ENCODE measurements at regions of chr16 and their contacts with region 1.

Region 1: GRCh38 chr16:52912565-52913173 is 140.0 kb downstream of the CHD9NB start:
- DNase-seq: peak; percentile 78
- ATAC-seq: peak; percentile 97
- H3K4me3 ChIP-seq: no peak overlapping the region
- H3K27ac ChIP-seq: no peak overlapping the region
- H3K4me1 ChIP-seq: no peaks in the 10 kb centered on the region
- H3K27me3 ChIP-seq: peaks cover 0 to 4% of the 10 kb centered on the region in 2 experiments; a peak in 2 of 5 replicates
- CTCF ChIP-seq: peak; percentile 90
- EP300 ChIP-seq: no peak
- POLR2A ChIP-seq: no peak
- RAD21 ChIP-seq: peak; percentile 91

Region 2: DNA sequence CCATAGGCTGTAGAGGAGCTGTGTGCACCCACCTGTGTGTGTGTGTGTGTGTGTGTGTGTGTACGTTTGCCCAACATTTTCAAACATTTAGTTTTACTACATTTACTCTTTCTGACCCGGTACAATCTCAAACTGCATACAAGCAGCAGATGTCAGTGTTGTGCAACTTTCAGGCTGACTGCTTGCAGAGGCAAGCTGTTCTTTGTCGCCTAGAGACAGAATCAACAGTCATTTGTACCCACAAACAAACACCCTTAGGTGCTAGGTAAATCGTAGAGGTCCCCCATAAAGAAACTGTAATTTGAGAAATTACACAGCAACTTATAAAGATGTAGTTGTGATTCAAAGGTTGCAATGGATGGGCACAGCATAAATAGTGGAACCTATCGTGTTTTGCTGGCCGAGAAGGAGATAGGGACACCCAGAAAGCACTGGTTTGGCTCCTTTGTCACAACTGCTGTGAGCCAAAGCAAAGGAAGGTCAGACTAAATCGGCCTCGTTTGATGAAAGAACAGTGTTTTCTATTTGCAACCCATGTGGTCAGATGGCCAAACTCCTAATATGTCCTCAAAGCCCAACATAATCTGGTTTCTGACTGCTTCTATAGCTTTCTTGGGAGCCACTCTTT is 844.1 kb before region 1 on chr16:
- CTCF ChIA-PET with region 1: interaction called, 53 read pairs
- POLR2A ChIA-PET with region 1: no interaction called
- in situ Hi-C with region 1: loop called (anchors 5 kb)
- intact Hi-C with region 1: loop called (anchors 1 kb)
- DNase-seq: peak; percentile 35
- ATAC-seq: peak; percentile 72
- H3K4me3 ChIP-seq: no peak overlapping the region
- H3K27ac ChIP-seq: no peak overlapping the region
- H3K4me1 ChIP-seq: no peaks in the 10 kb centered on the region
- H3K27me3 ChIP-seq: no peaks in the 10 kb centered on the region
- CTCF ChIP-seq: peak; percentile 80
- EP300 ChIP-seq: no peak
- POLR2A ChIP-seq: no peak
- RAD21 ChIP-seq: peak; percentile 55; the same call in 1 of the 2 replicates

Region 3: GRCh38 chr16:52184336-52184735 is 728.3 kb before region 1 on chr16:
- CTCF ChIA-PET with region 1: no interaction called
- POLR2A ChIA-PET with region 1: no interaction called
- in situ Hi-C with region 1: loop called (anchors 10 kb)
- intact Hi-C with region 1: no loop called
- DNase-seq: no peak
- ATAC-seq: no peak
- H3K4me3 ChIP-seq: no peak overlapping the region
- H3K27ac ChIP-seq: no peak overlapping the region
- H3K4me1 ChIP-seq: no peaks in the 10 kb centered on the region
- H3K27me3 ChIP-seq: no peaks in the 10 kb centered on the region; a peak in 1 of 5 replicates
- CTCF ChIP-seq: no peak
- EP300 ChIP-seq: no peak
- POLR2A ChIP-seq: no peak
- RAD21 ChIP-seq: no peak

Region 4: DNA sequence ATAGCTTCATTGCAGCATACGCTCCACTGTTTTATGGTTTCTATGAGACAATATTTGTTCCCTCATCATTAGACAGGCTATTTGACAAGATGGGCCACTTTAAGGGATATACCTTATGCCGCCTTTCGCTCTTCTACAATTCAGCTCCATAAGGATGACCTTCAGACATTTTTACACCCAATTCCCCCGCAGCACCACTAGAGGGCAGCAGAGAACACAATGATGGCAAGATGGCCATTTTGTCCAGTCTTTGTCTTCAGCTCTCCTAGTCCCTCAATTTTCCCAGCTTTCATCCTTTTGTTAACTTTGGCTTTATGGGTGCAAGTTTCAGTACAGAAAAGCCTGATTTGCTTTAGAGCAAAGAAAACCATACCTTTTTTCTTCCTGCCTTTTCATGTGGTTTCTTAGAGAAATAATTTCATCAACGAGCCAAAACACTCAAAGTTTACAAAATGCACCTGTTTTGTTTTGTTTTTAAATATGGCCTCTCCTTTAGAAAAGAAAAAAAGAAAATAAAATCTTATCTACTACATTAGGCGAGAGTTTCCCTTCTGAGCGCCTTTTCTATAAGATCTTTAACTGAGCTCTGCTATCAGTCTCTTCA is 721.0 kb before region 1 on chr16:
- CTCF ChIA-PET with region 1: interaction called, 14 read pairs
- POLR2A ChIA-PET with region 1: no interaction called
- in situ Hi-C with region 1: loop called (anchors 10 kb)
- intact Hi-C with region 1: loop called (anchors 1 kb)
- DNase-seq: peak; percentile 76
- ATAC-seq: peak; percentile 74
- H3K4me3 ChIP-seq: no peak overlapping the region
- H3K27ac ChIP-seq: no peak overlapping the region
- H3K4me1 ChIP-seq: peaks cover 9% of the 10 kb centered on the region
- H3K27me3 ChIP-seq: no peaks in the 10 kb centered on the region
- CTCF ChIP-seq: peak; percentile 97
- EP300 ChIP-seq: no peak
- POLR2A ChIP-seq: no peak
- RAD21 ChIP-seq: peak; percentile 90

Region 5: GRCh38 chr16:52652033-52652432 is 260.6 kb before region 1 on chr16:
- CTCF ChIA-PET with region 1: no interaction called
- POLR2A ChIA-PET with region 1: no interaction called
- in situ Hi-C with region 1: no loop called
- intact Hi-C with region 1: no loop called
- DNase-seq: no peak
- ATAC-seq: no peak
- H3K4me3 ChIP-seq: no peak overlapping the region
- H3K27ac ChIP-seq: no peak overlapping the region
- H3K4me1 ChIP-seq: peaks cover 15% of the 10 kb centered on the region
- H3K27me3 ChIP-seq: no peaks in the 10 kb centered on the region; a peak in 1 of 5 replicates
- CTCF ChIP-seq: no peak
- EP300 ChIP-seq: no peak
- POLR2A ChIP-seq: no peak
- RAD21 ChIP-seq: no peak

Region 6: DNA sequence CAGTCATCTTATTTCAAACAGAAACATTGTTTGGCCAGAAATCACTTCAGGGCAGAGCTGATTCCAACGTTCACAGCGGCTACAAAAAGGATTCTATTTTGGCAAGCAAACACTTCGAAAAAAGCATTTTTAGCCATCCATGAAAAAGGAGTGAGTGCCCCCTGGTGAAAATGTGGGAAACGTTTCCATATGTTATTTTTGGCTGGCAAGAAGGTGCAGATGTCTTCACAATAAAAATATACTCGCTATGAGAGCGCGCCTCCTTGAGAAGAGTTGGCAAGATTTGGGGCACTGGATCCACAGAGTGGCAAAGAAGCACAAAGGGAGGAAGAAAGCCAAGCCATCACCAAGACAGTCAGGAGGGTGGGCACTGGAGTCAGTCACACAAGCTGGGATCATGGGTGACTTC is 51.1 kb before region 1 on chr16:
- CTCF ChIA-PET with region 1: no interaction called
- POLR2A ChIA-PET with region 1: no interaction called
- in situ Hi-C with region 1: no loop called
- intact Hi-C with region 1: loop called (anchors 2 kb)
- DNase-seq: peak; percentile 65
- ATAC-seq: peak; percentile 78
- H3K4me3 ChIP-seq: no peak overlapping the region
- H3K27ac ChIP-seq: no peak overlapping the region
- H3K4me1 ChIP-seq: peaks cover 12% of the 10 kb centered on the region
- H3K27me3 ChIP-seq: peaks cover 0 to 5% of the 10 kb centered on the region in 2 experiments; a peak in 1 of 5 replicates
- CTCF ChIP-seq: peak; percentile 89
- EP300 ChIP-seq: 0 out of 4 replicates have a peak, but pooled peaks of 1 of the 2 experiments have one; percentile 19
- POLR2A ChIP-seq: no peak
- RAD21 ChIP-seq: peak; percentile 91

Region 7: DNA sequence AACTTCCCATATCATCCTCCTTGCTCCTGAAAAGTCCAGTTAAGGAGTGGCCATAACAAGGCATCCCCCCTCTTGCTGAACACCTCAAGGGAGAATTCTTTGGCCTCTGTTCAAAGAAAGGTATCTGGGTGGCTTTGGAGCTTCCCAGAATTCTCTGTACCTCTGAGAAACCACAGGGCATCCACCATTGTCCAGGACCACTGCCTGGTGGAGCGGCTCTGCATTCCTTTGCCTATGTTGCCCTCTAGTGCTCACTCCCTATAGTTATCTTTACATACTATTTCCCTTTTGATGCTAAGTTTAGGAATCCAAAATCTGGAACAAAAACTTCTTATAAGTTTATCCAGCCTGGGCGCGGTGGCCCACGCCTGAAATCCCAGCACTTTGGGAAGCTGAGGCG is 109.7 kb after region 1 on chr16:
- CTCF ChIA-PET with region 1: no interaction called
- POLR2A ChIA-PET with region 1: no interaction called
- in situ Hi-C with region 1: no loop called
- intact Hi-C with region 1: loop called (anchors 10 kb)
- DNase-seq: peak; percentile 63
- ATAC-seq: peak; percentile 97
- H3K4me3 ChIP-seq: no peak overlapping the region
- H3K27ac ChIP-seq: no peak overlapping the region
- H3K4me1 ChIP-seq: no peaks in the 10 kb centered on the region
- H3K27me3 ChIP-seq: peaks cover 0 to 7% of the 10 kb centered on the region in 2 experiments; a peak in 1 of 5 replicates
- CTCF ChIP-seq: peak; percentile 88
- EP300 ChIP-seq: no peak
- POLR2A ChIP-seq: no peak
- RAD21 ChIP-seq: peak; percentile 80

Measured in HepG2 (cell line).